CD8-positive, alpha-beta T cell (primary cell): ENCODE measurements at regions of chr22 and their contacts with region 1.

Region 1: DNA sequence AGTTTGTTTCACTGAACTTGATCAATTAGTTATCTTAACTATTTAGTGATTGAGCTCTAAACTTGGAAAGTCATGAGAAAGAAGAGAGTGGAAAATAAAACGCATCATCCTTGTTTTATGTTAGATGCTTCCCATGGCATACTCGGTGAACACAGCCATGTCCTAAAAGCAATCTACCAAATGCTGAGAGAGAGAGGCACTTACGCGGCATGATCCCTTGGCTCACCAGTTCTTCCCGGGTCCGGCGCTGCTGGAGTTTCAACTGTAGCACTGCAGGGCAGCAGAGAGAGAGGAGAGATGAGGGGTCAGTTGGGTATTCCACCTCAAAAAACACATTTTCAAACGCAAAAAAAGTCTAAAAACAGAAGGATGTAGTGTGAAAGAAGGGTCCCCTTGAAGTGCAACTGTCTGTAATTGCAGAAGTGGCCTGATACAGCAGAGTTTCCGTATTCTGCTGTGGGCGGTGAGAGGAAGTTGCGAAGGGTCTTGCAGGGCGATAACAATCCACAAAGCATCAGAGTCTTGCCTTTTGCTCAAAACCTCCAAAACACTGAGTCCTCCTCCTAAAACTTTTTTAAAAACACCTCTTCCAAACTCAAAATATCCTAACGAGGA is 92.7 kb downstream of the SGSM3 start:
- DNase-seq: peak in 8 of 9 experiments; percentile 22 to 74 (median 47)
- ATAC-seq: peak; percentile 81
- H3K4me3 ChIP-seq: peak overlapping the region; percentile 72 to 73
- H3K4me3 Mint-ChIP-seq: peak overlapping the region; percentile 98
- H3K27ac ChIP-seq: peak overlapping the region; percentile 70 to 71
- H3K27ac Mint-ChIP-seq: peak overlapping the region; percentile 98
- H3K4me1 ChIP-seq: peaks cover 51% of the 10 kb centered on the region
- H3K4me1 Mint-ChIP-seq: peaks cover 63% of the 10 kb centered on the region
- H3K27me3 ChIP-seq: no peaks in the 10 kb centered on the region
- H3K27me3 Mint-ChIP-seq: no peaks in the 10 kb centered on the region
- CTCF ChIP-seq: no peak

Region 2: GRCh38 chr22:40449676-40450035 is 13.5 kb before region 1 on chr22:
- CTCF ChIA-PET with region 1: interaction called, 5 read pairs
- POLR2A ChIA-PET with region 1: interaction called, 5 read pairs
- intact Hi-C with region 1: loop called in 1 of 2 experiments (anchors 1 kb)
- DNase-seq: no peak
- ATAC-seq: no peak
- H3K4me3 ChIP-seq: no peak overlapping the region
- H3K4me3 Mint-ChIP-seq: peak overlapping the region; percentile 35
- H3K27ac ChIP-seq: no peak overlapping the region
- H3K27ac Mint-ChIP-seq: peak overlapping the region; percentile 61
- H3K4me1 ChIP-seq: peaks cover 86% of the 10 kb centered on the region
- H3K4me1 Mint-ChIP-seq: peaks cover 81% of the 10 kb centered on the region
- H3K27me3 ChIP-seq: no peaks in the 10 kb centered on the region
- H3K27me3 Mint-ChIP-seq: no peaks in the 10 kb centered on the region
- CTCF ChIP-seq: no peak

Region 3: DNA sequence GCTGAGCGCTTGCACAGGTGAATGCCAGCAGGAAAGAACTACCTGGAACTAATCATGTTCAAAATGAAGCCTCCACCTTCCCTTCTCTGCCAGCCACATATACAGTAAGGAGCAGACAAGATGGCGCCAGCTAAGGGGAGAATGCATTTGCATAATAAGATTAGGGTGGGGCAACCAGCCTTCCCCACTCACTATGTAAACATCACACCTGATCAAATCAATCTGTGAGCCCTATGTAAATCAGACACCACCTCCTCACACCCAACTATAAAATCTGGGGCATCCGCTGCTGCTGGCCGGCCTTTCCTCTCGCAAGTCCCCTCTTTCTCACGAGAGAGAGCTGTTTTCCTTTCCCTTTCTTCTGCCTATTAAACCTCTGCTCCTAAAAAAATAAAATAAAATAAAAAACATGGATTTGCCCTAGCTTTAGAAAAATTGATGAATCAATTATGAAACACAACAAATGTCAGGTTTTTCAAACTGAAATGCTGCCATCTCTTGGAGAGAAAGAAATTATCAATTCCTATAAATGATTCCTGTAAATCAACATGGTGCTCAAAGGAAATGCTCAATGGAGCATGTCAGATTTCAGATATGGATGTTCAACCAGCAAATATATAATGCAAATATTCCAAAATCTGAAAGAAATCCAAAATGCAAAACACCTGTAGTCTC is 16.1 kb after region 1 on chr22:
- CTCF ChIA-PET with region 1: interaction called, 16 read pairs
- POLR2A ChIA-PET with region 1: interaction called, 8 read pairs
- intact Hi-C with region 1: no loop called
- DNase-seq: no peak
- ATAC-seq: no peak
- H3K4me3 ChIP-seq: no peak overlapping the region
- H3K4me3 Mint-ChIP-seq: no peak overlapping the region
- H3K27ac ChIP-seq: no peak overlapping the region
- H3K27ac Mint-ChIP-seq: no peak overlapping the region
- H3K4me1 ChIP-seq: no peaks in the 10 kb centered on the region
- H3K4me1 Mint-ChIP-seq: peaks cover 43% of the 10 kb centered on the region
- H3K27me3 ChIP-seq: no peaks in the 10 kb centered on the region
- H3K27me3 Mint-ChIP-seq: no peaks in the 10 kb centered on the region
- CTCF ChIP-seq: no peak